Endothelial cell of umbilical vein (primary cell): ENCODE measurements at regions of chrX and their contacts with region 1.

Region 1: GRCh38 chrX:41796577-41796976 is 72.6 kb downstream of the GPR82 start:
- DNase-seq: no peak
- H3K4me3 ChIP-seq: no peak overlapping the region
- H3K27ac ChIP-seq: no peak overlapping the region
- H3K4me1 ChIP-seq: no peaks in the 10 kb centered on the region
- H3K27me3 ChIP-seq: no peaks in the 10 kb centered on the region
- CTCF ChIP-seq: no peak
- POLR2A ChIP-seq: no peak

Region 2: GRCh38 chrX:41653125-41653524 is 143.5 kb before region 1 on chrX:
- CTCF ChIA-PET with region 1: no interaction called
- POLR2A ChIA-PET with region 1: no interaction called
- dilution Hi-C with region 1: no loop called
- intact Hi-C with region 1: no loop called
- DNase-seq: no peak
- H3K4me3 ChIP-seq: no peak overlapping the region
- H3K27ac ChIP-seq: no peak overlapping the region
- H3K4me1 ChIP-seq: no peaks in the 10 kb centered on the region
- H3K27me3 ChIP-seq: no peaks in the 10 kb centered on the region
- CTCF ChIP-seq: no peak
- POLR2A ChIP-seq: no peak

Region 3: GRCh38 chrX:41781502-41781901 is 15.1 kb before region 1 on chrX:
- CTCF ChIA-PET with region 1: interaction called, 21 read pairs
- POLR2A ChIA-PET with region 1: no interaction called
- dilution Hi-C with region 1: no loop called
- intact Hi-C with region 1: no loop called
- DNase-seq: peak; percentile 49
- H3K4me3 ChIP-seq: no peak overlapping the region
- H3K27ac ChIP-seq: no peak overlapping the region
- H3K4me1 ChIP-seq: peaks cover 12% of the 10 kb centered on the region
- H3K27me3 ChIP-seq: no peaks in the 10 kb centered on the region
- CTCF ChIP-seq: peak; percentile 48 to 49
- POLR2A ChIP-seq: no peak

Region 4: GRCh38 chrX:41971333-41971732 is 174.8 kb after region 1 on chrX:
- CTCF ChIA-PET with region 1: no interaction called
- POLR2A ChIA-PET with region 1: no interaction called
- dilution Hi-C with region 1: no loop called
- intact Hi-C with region 1: no loop called
- DNase-seq: no peak
- H3K4me3 ChIP-seq: no peak overlapping the region
- H3K27ac ChIP-seq: no peak overlapping the region
- H3K4me1 ChIP-seq: no peaks in the 10 kb centered on the region
- H3K27me3 ChIP-seq: no peaks in the 10 kb centered on the region
- CTCF ChIP-seq: no peak
- POLR2A ChIP-seq: no peak

Region 5: GRCh38 chrX:42028109-42028508 is 231.5 kb after region 1 on chrX:
- CTCF ChIA-PET with region 1: no interaction called
- POLR2A ChIA-PET with region 1: no interaction called
- dilution Hi-C with region 1: no loop called
- intact Hi-C with region 1: no loop called
- DNase-seq: no peak
- H3K4me3 ChIP-seq: no peak overlapping the region
- H3K27ac ChIP-seq: no peak overlapping the region
- H3K4me1 ChIP-seq: peaks cover 5% of the 10 kb centered on the region
- H3K27me3 ChIP-seq: no peaks in the 10 kb centered on the region
- CTCF ChIP-seq: no peak
- POLR2A ChIP-seq: no peak

Region 6: DNA sequence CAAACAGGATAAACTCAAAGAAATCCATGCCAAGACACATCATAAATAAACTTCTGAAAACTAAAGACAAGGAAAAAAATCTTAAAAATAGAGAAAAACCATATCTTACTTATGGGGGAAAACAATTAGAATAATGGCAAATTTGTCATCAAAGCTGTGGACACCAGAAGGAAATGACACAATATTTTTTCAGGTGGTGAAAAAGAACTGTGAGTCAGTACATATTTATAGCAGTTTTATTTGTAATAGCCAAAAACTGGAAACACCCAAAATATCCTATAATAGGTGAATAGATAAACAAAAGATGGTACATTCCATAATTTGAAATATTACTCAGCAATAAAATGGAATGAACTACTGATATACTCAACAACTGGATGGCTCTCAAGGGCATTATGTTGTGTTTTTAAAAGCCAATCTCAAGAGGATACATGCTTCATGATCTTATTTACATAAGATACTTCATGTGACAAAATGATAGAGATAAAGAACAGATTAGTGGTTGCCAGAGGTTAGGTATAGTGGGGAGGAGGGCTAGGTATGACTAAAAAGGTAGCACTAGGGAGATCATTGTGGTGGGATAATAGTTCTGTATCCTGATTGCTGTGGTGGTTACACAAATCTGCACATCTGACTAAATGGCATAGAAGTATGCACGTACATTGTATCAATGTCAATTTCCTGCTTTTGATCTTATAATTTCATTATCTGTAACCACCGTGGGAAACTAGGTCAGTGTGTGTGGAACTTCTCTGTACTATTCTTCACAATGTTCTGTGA is 789.5 kb after region 1 on chrX:
- CTCF ChIA-PET with region 1: no interaction called
- POLR2A ChIA-PET with region 1: no interaction called
- dilution Hi-C with region 1: no loop called
- intact Hi-C with region 1: loop called (anchors 10 kb)
- DNase-seq: peak; percentile 55
- H3K4me3 ChIP-seq: no peak overlapping the region
- H3K27ac ChIP-seq: peak overlapping the region; percentile 48
- H3K4me1 ChIP-seq: peaks cover 12% of the 10 kb centered on the region
- H3K27me3 ChIP-seq: no peaks in the 10 kb centered on the region
- CTCF ChIP-seq: no peak
- POLR2A ChIP-seq: no peak